ENCODE measurements at regions of chr14 and their contacts with region 1.

Region 1: GRCh38 chr14:45134051-45134958 is at the start of gene FKBP3:
- DNase-seq: peak; percentile 91
- ATAC-seq: peak; percentile 92
- H3K4me3 ChIP-seq: peak within 1 kb of the TSS; percentile 93
- H3K27ac ChIP-seq: peak within 1 kb of the TSS; percentile 77
- H3K4me1 ChIP-seq: no peaks in the 10 kb centered on the region
- H3K27me3 ChIP-seq: no peaks in the 10 kb centered on the region
- CTCF ChIP-seq: peak; percentile 18 to 54 (median 32); a peak in 4 of 6 replicates
- EP300 ChIP-seq: no peak
- POLR2A ChIP-seq: peak; percentile 96
- RAD21 ChIP-seq: peak; percentile 49
- polyA plus RNA-seq, gene FKBP3: 148 to 169 TPM

Region 2: DNA sequence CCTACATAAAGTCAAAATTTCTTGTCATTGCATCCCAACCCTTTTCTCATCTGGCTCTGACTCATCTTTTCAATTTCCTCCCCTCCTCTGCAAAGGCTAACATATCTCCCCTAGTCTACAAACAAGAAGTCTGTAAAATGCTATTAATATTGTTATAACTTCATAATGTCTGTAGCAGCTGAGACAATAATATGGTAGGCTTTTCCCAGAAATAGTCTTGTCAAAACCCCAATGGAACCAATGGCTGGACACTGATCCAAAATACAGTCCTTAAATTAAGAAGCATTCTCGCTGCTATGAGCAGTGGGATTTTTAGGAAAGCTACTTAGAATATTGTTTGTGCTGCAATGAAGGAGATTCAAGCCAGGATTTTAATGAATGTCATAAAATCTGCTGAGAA is 303.9 kb before region 1 on chr14:
- CTCF ChIA-PET with region 1: no interaction called
- POLR2A ChIA-PET with region 1: no interaction called
- RAD21 ChIA-PET with region 1: no interaction called
- SMC1A ChIA-PET with region 1: no interaction called
- in situ Hi-C with region 1: no loop called
- intact Hi-C with region 1: no loop called
- DNase-seq: no peak
- ATAC-seq: no peak
- H3K4me3 ChIP-seq: no peak overlapping the region
- H3K27ac ChIP-seq: no peak overlapping the region
- H3K4me1 ChIP-seq: no peaks in the 10 kb centered on the region
- H3K27me3 ChIP-seq: no peaks in the 10 kb centered on the region
- CTCF ChIP-seq: no peak
- EP300 ChIP-seq: no peak
- POLR2A ChIP-seq: no peak
- RAD21 ChIP-seq: no peak

Region 3: GRCh38 chr14:44912041-44912869 is 222.1 kb before region 1 on chr14:
- CTCF ChIA-PET with region 1: interaction called, 8 read pairs
- POLR2A ChIA-PET with region 1: no interaction called
- RAD21 ChIA-PET with region 1: interaction called, 7 read pairs
- SMC1A ChIA-PET with region 1: interaction called, 3 read pairs
- in situ Hi-C with region 1: no loop called
- intact Hi-C with region 1: loop called (anchors 1 kb)
- DNase-seq: no peak
- ATAC-seq: no peak
- H3K4me3 ChIP-seq: no peak overlapping the region
- H3K27ac ChIP-seq: no peak overlapping the region
- H3K4me1 ChIP-seq: no peaks in the 10 kb centered on the region
- H3K27me3 ChIP-seq: no peaks in the 10 kb centered on the region
- CTCF ChIP-seq: no peak
- EP300 ChIP-seq: no peak
- POLR2A ChIP-seq: no peak
- RAD21 ChIP-seq: no peak

Region 4: DNA sequence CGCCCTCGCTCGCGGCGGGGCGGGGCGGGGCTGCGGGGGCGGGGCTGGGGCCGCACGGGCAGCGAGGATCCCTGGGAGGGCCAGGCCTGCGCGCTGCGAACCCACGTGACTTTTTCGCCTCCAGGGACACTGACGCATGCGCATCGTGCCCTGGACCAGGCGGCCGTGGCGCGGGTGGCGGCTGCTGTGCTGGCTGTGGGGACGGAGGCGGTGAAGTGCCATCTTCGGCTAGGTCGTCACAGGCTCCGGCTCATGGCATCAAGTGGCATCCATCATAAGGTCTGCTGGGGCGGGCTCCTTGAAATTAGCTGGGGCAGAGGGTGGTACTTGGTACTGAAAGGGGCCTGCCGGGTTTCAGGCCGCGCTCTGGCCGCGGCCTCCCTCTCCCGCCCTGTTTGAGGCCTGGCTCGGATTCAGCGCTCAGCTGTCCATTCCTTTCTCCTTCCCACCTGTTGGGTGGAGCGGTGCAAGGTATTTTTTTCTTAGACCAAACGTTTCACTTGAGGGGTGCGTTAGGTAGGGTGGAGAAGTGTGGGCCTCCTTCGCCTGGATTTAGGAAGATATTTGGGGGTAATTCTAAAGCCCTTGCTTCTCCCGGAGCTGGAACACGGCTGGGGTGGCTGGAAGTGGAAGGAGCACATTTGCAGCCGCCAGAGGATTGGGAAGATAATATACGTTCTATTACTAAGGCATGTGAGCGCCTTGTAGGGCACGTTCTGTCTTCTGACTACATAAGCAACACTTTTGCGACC is 50.2 kb before region 1 on chr14 and contains the start of gene PRPF39:
- CTCF ChIA-PET with region 1: interaction called, 3 read pairs
- POLR2A ChIA-PET with region 1: interaction called, 6 read pairs
- RAD21 ChIA-PET with region 1: interaction called, 4 read pairs
- SMC1A ChIA-PET with region 1: interaction called, 11 read pairs
- in situ Hi-C with region 1: no loop called
- intact Hi-C with region 1: no loop called
- DNase-seq: peak; percentile 84
- ATAC-seq: peak; percentile 92
- H3K4me3 ChIP-seq: peak within 1 kb of the TSS; percentile 99
- H3K27ac ChIP-seq: peak within 1 kb of the TSS; percentile 88
- H3K4me1 ChIP-seq: peaks cover 11% of the 10 kb centered on the region
- H3K27me3 ChIP-seq: no peaks in the 10 kb centered on the region
- CTCF ChIP-seq: no peak
- EP300 ChIP-seq: no peak
- POLR2A ChIP-seq: peak; percentile 99
- RAD21 ChIP-seq: no peak
- polyA plus RNA-seq, gene PRPF39: 22.1 to 22.3 TPM

Region 5: GRCh38 chr14:45177076-45177475 is 42.8 kb after region 1 on chr14:
- CTCF ChIA-PET with region 1: no interaction called
- POLR2A ChIA-PET with region 1: no interaction called
- RAD21 ChIA-PET with region 1: no interaction called
- SMC1A ChIA-PET with region 1: no interaction called
- in situ Hi-C with region 1: no loop called
- intact Hi-C with region 1: no loop called
- DNase-seq: no peak
- ATAC-seq: no peak
- H3K4me3 ChIP-seq: no peak overlapping the region
- H3K27ac ChIP-seq: no peak overlapping the region
- H3K4me1 ChIP-seq: no peaks in the 10 kb centered on the region
- H3K27me3 ChIP-seq: no peaks in the 10 kb centered on the region
- CTCF ChIP-seq: no peak
- EP300 ChIP-seq: no peak
- POLR2A ChIP-seq: no peak
- RAD21 ChIP-seq: no peak

Region 6: GRCh38 chr14:45253068-45253753 is 118.9 kb after region 1 on chr14 and contains the start of gene MIS18BP1:
- CTCF ChIA-PET with region 1: no interaction called
- POLR2A ChIA-PET with region 1: interaction called, 5 read pairs
- RAD21 ChIA-PET with region 1: interaction called, 8 read pairs
- SMC1A ChIA-PET with region 1: interaction called, 4 read pairs
- in situ Hi-C with region 1: no loop called
- intact Hi-C with region 1: loop called (anchors 2 kb)
- DNase-seq: peak; percentile 81
- ATAC-seq: peak; percentile 85
- H3K4me3 ChIP-seq: peak within 1 kb of the TSS; percentile 98
- H3K27ac ChIP-seq: peak within 1 kb of the TSS; percentile 85
- H3K4me1 ChIP-seq: peaks cover 8% of the 10 kb centered on the region
- H3K27me3 ChIP-seq: no peaks in the 10 kb centered on the region
- CTCF ChIP-seq: peak; percentile 80 to 95 (median 90)
- EP300 ChIP-seq: peak in 1 of 2 experiments; percentile 62; a peak in 1 of 4 replicates
- POLR2A ChIP-seq: peak; percentile 82
- RAD21 ChIP-seq: peak; percentile 49
- polyA plus RNA-seq, gene MIS18BP1: 16.9 to 17.7 TPM

Measured in GM12878 (cell line).